ENCODE measurements at regions of chr1 and their contacts with region 1.

Region 1: GRCh38 chr1:194175251-194175650 is 988.8 kb upstream of the B3GALT2 start:
- DNase-seq: no peak
- H3K4me3 Mint-ChIP-seq: no peak overlapping the region
- H3K27ac Mint-ChIP-seq: no peak overlapping the region
- H3K4me1 Mint-ChIP-seq: peaks cover 16% of the 10 kb centered on the region
- H3K27me3 Mint-ChIP-seq: no peaks in the 10 kb centered on the region
- CTCF ChIP-seq: no peak

Region 2: GRCh38 chr1:194225821-194226220 is 50.6 kb after region 1 on chr1:
- CTCF ChIA-PET with region 1: no interaction called
- intact Hi-C with region 1: loop called (anchors 2 kb)
- DNase-seq: no peak
- H3K4me3 Mint-ChIP-seq: no peak overlapping the region
- H3K27ac Mint-ChIP-seq: no peak overlapping the region
- H3K4me1 Mint-ChIP-seq: no peaks in the 10 kb centered on the region
- H3K27me3 Mint-ChIP-seq: no peaks in the 10 kb centered on the region
- CTCF ChIP-seq: no peak

Region 3: GRCh38 chr1:194318790-194319280 is 143.6 kb after region 1 on chr1:
- CTCF ChIA-PET with region 1: no interaction called
- intact Hi-C with region 1: no loop called
- DNase-seq: no peak
- H3K4me3 Mint-ChIP-seq: no peak overlapping the region
- H3K27ac Mint-ChIP-seq: no peak overlapping the region
- H3K4me1 Mint-ChIP-seq: no peaks in the 10 kb centered on the region
- H3K27me3 Mint-ChIP-seq: no peaks in the 10 kb centered on the region
- CTCF ChIP-seq: no peak